Natural killer cell (primary cell): ENCODE measurements at regions of chr1 and their contacts with region 1.

Region 1: DNA sequence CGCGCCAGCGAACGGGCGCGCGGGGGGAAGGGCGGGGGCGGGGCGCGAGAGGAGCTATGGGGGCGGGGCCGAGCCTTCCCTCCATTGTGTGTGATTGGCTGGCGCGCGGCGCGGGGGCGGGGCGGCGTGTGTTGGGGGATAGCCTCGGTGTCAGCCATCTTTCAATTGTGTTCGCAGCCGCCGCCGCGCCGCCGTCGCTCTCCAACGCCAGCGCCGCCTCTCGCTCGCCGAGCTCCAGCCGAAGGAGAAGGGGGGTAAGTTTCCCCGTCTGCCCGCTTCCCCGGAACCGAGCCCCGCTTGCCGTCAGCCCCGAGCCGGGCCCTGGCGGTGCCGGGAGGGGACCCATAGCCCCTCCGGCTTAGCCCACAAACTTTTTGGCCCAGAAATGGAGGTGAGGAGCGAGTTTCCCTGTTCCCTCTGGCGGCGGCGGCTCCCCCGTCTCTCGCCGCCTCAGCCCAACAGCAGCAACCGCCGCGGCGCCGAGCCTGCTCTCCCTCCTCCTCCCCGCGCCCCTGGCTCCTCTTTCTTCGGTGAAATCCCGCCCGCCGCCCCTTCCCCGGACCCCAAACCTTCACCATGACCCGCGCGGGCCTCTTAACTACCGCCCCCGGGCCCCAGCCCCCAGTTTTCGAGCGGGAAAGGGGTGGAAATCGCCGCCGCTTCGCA is at the start of gene H3-3A:
- DNase-seq: peak; percentile 97 to 98
- ATAC-seq: peak; percentile 81 to 96 (median 84)
- H3K4me3 ChIP-seq: peak within 1 kb of the TSS; percentile 63
- H3K4me3 Mint-ChIP-seq: peak within 1 kb of the TSS; percentile 100
- H3K27ac ChIP-seq: peak within 1 kb of the TSS; percentile 96
- H3K27ac Mint-ChIP-seq: peak within 1 kb of the TSS; percentile 99
- H3K4me1 ChIP-seq: peaks cover 18% of the 10 kb centered on the region
- H3K4me1 Mint-ChIP-seq: peaks cover 50% of the 10 kb centered on the region in 2 donors
- H3K27me3 ChIP-seq: no peaks in the 10 kb centered on the region
- H3K27me3 Mint-ChIP-seq: no peaks in the 10 kb centered on the region
- CTCF ChIP-seq: no peak
- total RNA-seq, gene H3-3A: 490 to 616 (median 522) TPM

Region 2: DNA sequence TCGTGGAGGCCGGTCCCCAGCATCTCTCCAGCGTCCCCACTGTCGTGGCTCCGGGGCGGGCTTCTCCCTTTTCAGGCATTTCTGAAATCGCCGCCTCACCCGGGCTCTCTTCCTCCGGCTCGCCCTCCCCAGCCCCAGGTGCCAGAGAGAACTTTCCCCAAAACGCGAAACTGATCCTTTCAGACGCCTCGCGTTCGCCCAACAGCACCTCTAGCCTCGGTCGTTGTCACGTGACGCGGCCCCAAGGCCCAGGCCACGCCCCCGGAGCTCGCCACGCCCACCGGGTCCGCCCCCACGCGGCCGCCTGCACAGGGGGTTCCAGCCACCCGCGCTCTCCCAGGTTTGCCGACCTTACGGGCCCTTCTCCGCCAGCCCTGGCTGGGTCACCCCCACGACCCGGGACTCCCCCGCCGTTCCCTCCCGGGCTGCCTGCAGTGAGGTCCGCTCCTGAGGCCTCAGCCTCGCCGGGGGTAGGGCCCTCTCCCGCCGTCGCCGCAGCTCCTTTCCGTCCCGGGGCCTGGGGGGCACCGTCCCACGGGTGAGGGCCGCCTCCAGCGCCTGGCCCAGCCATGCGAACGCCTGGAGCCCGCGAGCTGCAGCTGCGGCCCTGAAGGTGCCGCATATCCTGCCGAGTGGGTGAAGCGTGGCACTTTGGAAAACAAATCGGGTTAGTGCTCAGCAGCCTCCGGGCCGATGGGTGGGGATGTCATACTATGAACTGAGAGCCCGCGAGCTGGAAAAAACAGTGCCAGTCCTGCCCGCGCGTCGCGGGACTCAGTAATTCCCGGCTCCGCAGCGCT is 20.8 kb after region 1 on chr1:
- intact Hi-C with region 1: loop called (anchors 1 kb)
- DNase-seq: peak; percentile 94 to 97
- ATAC-seq: peak; percentile 97
- H3K4me3 ChIP-seq: peak overlapping the region; percentile 59
- H3K4me3 Mint-ChIP-seq: peak overlapping the region; percentile 97
- H3K27ac ChIP-seq: no peak overlapping the region
- H3K27ac Mint-ChIP-seq: peak overlapping the region; percentile 58 to 88
- H3K4me1 ChIP-seq: peaks cover 15% of the 10 kb centered on the region
- H3K4me1 Mint-ChIP-seq: peaks cover 11 to 13% of the 10 kb centered on the region in 2 donors
- H3K27me3 ChIP-seq: no peaks in the 10 kb centered on the region
- H3K27me3 Mint-ChIP-seq: no peaks in the 10 kb centered on the region
- CTCF ChIP-seq: no peak

Region 3: GRCh38 chr1:226195144-226195543 is 132.5 kb after region 1 on chr1:
- intact Hi-C with region 1: loop called (anchors 5 kb)
- DNase-seq: no peak
- ATAC-seq: no peak
- H3K4me3 ChIP-seq: no peak overlapping the region
- H3K4me3 Mint-ChIP-seq: no peak overlapping the region
- H3K27ac ChIP-seq: no peak overlapping the region
- H3K27ac Mint-ChIP-seq: no peak overlapping the region
- H3K4me1 ChIP-seq: no peaks in the 10 kb centered on the region
- H3K4me1 Mint-ChIP-seq: peaks cover 0 to 5% of the 10 kb centered on the region in 2 donors
- H3K27me3 ChIP-seq: no peaks in the 10 kb centered on the region
- H3K27me3 Mint-ChIP-seq: peaks cover 0 to 11% of the 10 kb centered on the region in 2 donors
- CTCF ChIP-seq: no peak